Sigmoid colon (tissue), 7 donors: ENCODE measurements at regions of chrX and their contacts with region 1.

Region 1: GRCh38 chrX:118603981-118604380 is 108.4 kb downstream of the DOCK11 start:
- DNase-seq: peak; percentile 76
- H3K4me3 ChIP-seq: no peak overlapping the region
- H3K27ac ChIP-seq: peak overlapping the region in 3 of 4 donors; percentile 34 to 59 (median 39)
- H3K4me1 ChIP-seq: peaks cover 0 to 10% (median 2%) of the 10 kb centered on the region in 4 donors
- H3K27me3 ChIP-seq: no peaks in the 10 kb centered on the region
- CTCF ChIP-seq: peak; percentile 58 to 81 (median 62)
- EP300 ChIP-seq: no peak
- POLR2A ChIP-seq: no peak

Region 2: GRCh38 chrX:118459494-118459893 is 144.5 kb before region 1 on chrX:
- intact Hi-C with region 1: loop called (anchors 2 kb)
- DNase-seq: no peak
- H3K4me3 ChIP-seq: no peak overlapping the region
- H3K27ac ChIP-seq: no peak overlapping the region
- H3K4me1 ChIP-seq: no peaks in the 10 kb centered on the region
- H3K27me3 ChIP-seq: no peaks in the 10 kb centered on the region
- CTCF ChIP-seq: peak; percentile 40 to 48 (median 42)
- EP300 ChIP-seq: no peak
- POLR2A ChIP-seq: no peak

Region 3: GRCh38 chrX:119685225-119686066 is 1081.5 kb after region 1 on chrX:
- intact Hi-C with region 1: no loop called
- DNase-seq: peak; percentile 73
- H3K4me3 ChIP-seq: no peak overlapping the region
- H3K27ac ChIP-seq: peak overlapping the region; percentile 78 to 93 (median 86)
- H3K4me1 ChIP-seq: peaks cover 0 to 40% (median 30%) of the 10 kb centered on the region in 4 donors
- H3K27me3 ChIP-seq: no peaks in the 10 kb centered on the region
- CTCF ChIP-seq: no peak
- EP300 ChIP-seq: peak in 2 of 4 donors; percentile 6 to 50
- POLR2A ChIP-seq: no peak